GM10248 (cell line): ENCODE measurements at regions of chr3 and their contacts with region 1.

Region 1: GRCh38 chr3:52415800-52416199 is 29.1 kb downstream of the SEMA3G start:
- DNase-seq: no peak
- CTCF ChIP-seq: no peak

Region 2: GRCh38 chr3:52428151-52429005 is 12.6 kb after region 1 on chr3:
- CTCF ChIA-PET with region 1: interaction called, 21 read pairs
- POLR2A ChIA-PET with region 1: no interaction called
- DNase-seq: peak; percentile 60
- CTCF ChIP-seq: peak; percentile 81

Region 3: DNA sequence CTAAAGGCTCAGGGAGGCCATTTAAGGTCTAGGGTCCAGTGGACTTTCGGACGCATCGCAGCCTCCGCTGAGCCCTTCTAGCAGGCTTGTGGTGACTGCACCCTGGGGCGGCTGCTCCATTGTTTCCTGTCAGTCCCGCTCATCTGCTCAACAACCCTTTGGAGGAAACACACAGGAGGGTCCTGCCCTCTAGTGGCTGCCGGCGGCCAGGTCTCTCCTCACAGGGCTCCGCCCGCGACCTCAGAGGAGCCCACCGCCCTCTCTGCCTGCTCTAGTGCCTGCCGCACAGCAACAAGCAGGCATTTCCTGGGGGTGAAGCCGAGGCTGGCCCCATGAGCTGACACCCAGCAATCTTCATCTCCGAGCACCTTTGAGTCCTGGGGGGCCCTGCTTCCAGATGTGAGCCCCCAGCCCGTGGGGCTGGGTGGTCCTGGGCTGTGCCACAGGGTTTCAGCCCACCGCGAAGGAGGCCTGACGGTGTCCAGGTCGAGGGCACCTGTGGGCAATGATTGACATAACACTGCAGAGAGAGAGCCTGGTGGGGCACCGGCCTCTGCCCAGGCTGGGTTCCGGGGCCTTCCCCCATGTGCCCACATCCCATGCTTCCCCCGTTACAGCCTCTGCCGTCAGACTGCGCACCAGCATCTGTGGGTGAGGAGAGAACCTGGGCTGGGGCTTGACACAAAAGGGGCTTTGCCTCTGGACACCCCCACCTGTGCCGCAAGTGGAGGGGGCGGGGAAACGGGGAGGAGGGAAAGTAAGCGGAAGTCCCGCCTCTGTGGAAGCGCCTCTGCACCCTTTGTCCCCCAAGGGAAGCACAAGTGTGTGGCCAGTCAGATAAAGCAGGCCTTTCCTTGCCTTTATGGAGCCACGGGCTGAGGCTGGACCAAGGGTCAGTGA is 657.1 kb after region 1 on chr3:
- CTCF ChIA-PET with region 1: no interaction called
- POLR2A ChIA-PET with region 1: no interaction called
- DNase-seq: peak; percentile 91
- CTCF ChIP-seq: peak; percentile 94